ENCODE measurements at regions of chr19 and their contacts with region 1.

Region 1: GRCh38 chr19:8355631-8356402 is 8.1 kb upstream of the ANGPTL4 start:
- DNase-seq: peak; percentile 80 to 83
- ATAC-seq: peak; percentile 73
- H3K4me3 ChIP-seq: no peak overlapping the region
- H3K27ac ChIP-seq: peak overlapping the region in 1 of 2 donors; percentile 3
- H3K4me1 ChIP-seq: no peaks in the 10 kb centered on the region
- H3K27me3 ChIP-seq: no peaks in the 10 kb centered on the region

Region 2: GRCh38 chr19:8224394-8225145 is 131.2 kb before region 1 on chr19:
- intact Hi-C with region 1: no loop called
- DNase-seq: no peak
- ATAC-seq: no peak
- H3K4me3 ChIP-seq: no peak overlapping the region
- H3K27ac ChIP-seq: no peak overlapping the region
- H3K4me1 ChIP-seq: no peaks in the 10 kb centered on the region
- H3K27me3 ChIP-seq: no peaks in the 10 kb centered on the region

Region 3: GRCh38 chr19:8389891-8390616 is 34.2 kb after region 1 on chr19 and contains the start of gene RAB11B:
- intact Hi-C with region 1: loop called in 1 of 2 experiments (anchors 2 kb)
- DNase-seq: peak; percentile 99 to 100
- ATAC-seq: peak; percentile 98
- H3K4me3 ChIP-seq: peak within 1 kb of the TSS; percentile 76 to 97
- H3K27ac ChIP-seq: peak within 1 kb of the TSS; percentile 80 to 100
- H3K4me1 ChIP-seq: no peaks in the 10 kb centered on the region
- H3K27me3 ChIP-seq: no peaks in the 10 kb centered on the region
- total RNA-seq, gene RAB11B: 119 TPM

Region 4: GRCh38 chr19:8396563-8397203 is 40.9 kb after region 1 on chr19:
- intact Hi-C with region 1: loop called (anchors 2 kb)
- DNase-seq: peak; percentile 76 to 92
- ATAC-seq: no peak
- H3K4me3 ChIP-seq: no peak overlapping the region
- H3K27ac ChIP-seq: no peak overlapping the region
- H3K4me1 ChIP-seq: no peaks in the 10 kb centered on the region
- H3K27me3 ChIP-seq: no peaks in the 10 kb centered on the region

Region 5: GRCh38 chr19:8505680-8506401 is 150.0 kb after region 1 on chr19:
- intact Hi-C with region 1: loop called (anchors 2 to 5 kb)
- DNase-seq: peak; percentile 84 to 93
- ATAC-seq: peak; percentile 90
- H3K4me3 ChIP-seq: peak overlapping the region; percentile 22 to 48
- H3K27ac ChIP-seq: no peak overlapping the region
- H3K4me1 ChIP-seq: no peaks in the 10 kb centered on the region
- H3K27me3 ChIP-seq: no peaks in the 10 kb centered on the region

Region 6: DNA sequence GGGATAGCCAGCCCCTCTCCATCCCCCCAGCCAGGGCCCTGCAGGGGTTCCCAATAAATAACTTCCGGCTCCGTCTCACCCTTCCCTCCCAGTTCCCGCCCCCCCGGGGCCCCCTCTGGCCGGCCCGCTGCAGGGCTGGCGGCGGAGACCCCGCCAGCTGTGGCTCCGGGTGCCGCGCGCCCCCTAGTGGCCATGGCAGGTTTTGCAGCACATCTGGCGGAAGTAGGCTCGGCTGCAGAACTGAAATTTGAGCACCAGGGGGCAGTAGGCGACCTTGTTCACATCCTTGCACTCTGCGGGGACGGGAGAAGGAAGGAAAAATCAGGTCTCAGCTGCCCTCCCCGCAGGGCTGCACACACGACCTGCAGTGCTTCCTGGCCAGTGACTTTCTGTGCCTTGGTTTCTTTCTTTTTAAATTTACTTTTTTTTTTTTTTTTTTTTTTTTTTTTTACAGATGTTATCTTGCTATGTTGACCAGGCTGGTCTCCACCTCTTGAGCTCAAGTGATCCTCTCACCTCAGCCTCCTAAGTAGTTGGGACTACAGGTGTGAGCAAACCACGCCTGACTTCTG is 225.0 kb after region 1 on chr19:
- intact Hi-C with region 1: loop called in 1 of 2 experiments (anchors 10 kb)
- DNase-seq: peak; percentile 87 to 93
- ATAC-seq: peak; percentile 90
- H3K4me3 ChIP-seq: no peak overlapping the region
- H3K27ac ChIP-seq: no peak overlapping the region
- H3K4me1 ChIP-seq: no peaks in the 10 kb centered on the region
- H3K27me3 ChIP-seq: no peaks in the 10 kb centered on the region

Region 7: GRCh38 chr19:8615813-8616596 is 260.2 kb after region 1 on chr19:
- intact Hi-C with region 1: no loop called
- DNase-seq: peak; percentile 81 to 88
- ATAC-seq: peak; percentile 66
- H3K4me3 ChIP-seq: no peak overlapping the region
- H3K27ac ChIP-seq: no peak overlapping the region
- H3K4me1 ChIP-seq: no peaks in the 10 kb centered on the region
- H3K27me3 ChIP-seq: no peaks in the 10 kb centered on the region

Region 8: GRCh38 chr19:8654591-8655339 is 298.9 kb after region 1 on chr19:
- intact Hi-C with region 1: no loop called
- DNase-seq: peak; percentile 66 to 88
- ATAC-seq: peak; percentile 84
- H3K4me3 ChIP-seq: no peak overlapping the region
- H3K27ac ChIP-seq: no peak overlapping the region
- H3K4me1 ChIP-seq: no peaks in the 10 kb centered on the region
- H3K27me3 ChIP-seq: no peaks in the 10 kb centered on the region

Measured in aorta (tissue), 5 donors.